Activated naive CD4-positive, alpha-beta T cell treated with anti-CD3 and anti-CD28 coated beads for 36 hours (primary cell): ENCODE measurements at regions of chr9 and their contacts with region 1.

Region 1: GRCh38 chr9:86413966-86414880 is 60.0 kb upstream of the TUT7 start:
- DNase-seq: no peak
- H3K4me3 Mint-ChIP-seq: no peak overlapping the region
- H3K27ac Mint-ChIP-seq: no peak overlapping the region
- H3K4me1 Mint-ChIP-seq: no peaks in the 10 kb centered on the region
- H3K27me3 Mint-ChIP-seq: peaks cover 4% of the 10 kb centered on the region

Region 2: GRCh38 chr9:86434039-86434726 is 20.0 kb after region 1 on chr9:
- CTCF ChIA-PET with region 1: interaction called, 13 read pairs
- intact Hi-C with region 1: no loop called
- DNase-seq: no peak
- H3K4me3 Mint-ChIP-seq: no peak overlapping the region
- H3K27ac Mint-ChIP-seq: no peak overlapping the region
- H3K4me1 Mint-ChIP-seq: no peaks in the 10 kb centered on the region
- H3K27me3 Mint-ChIP-seq: peaks cover 16% of the 10 kb centered on the region